Left cardiac atrium (tissue), 4 donors: ENCODE measurements at regions of chr15 and their contacts with region 1.

Region 1: GRCh38 chr15:85000937-85001336 is 19.3 kb downstream of the PDE8A start:
- DNase-seq: peak; percentile 52
- ATAC-seq: peak in 1 of 2 donors; percentile 44

Region 2: DNA sequence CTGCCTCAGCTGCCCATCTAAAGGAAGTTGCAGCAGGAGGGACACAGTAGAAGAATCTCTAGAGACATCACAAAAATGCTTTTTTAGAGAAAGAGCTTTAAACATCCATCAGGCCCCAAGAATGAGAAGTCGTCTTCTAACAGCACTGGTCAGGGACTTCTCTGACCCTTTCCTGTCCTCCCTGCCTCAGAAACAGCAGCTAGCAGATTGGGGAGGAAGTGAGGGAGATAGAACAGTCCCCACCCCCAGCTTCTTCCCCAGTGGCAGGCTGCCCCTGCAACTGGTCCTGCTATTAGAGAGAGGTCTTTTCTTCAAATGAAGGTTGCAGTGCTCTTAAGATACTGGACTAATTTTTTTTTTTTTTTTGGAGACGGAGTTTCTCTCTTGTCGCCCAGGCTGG is 35.8 kb after region 1 on chr15:
- intact Hi-C with region 1: loop called in 1 of 2 experiments (anchors 1 kb)
- DNase-seq: no peak
- ATAC-seq: peak; percentile 55 to 68

Region 3: GRCh38 chr15:85354461-85354860 is 353.5 kb after region 1 on chr15:
- intact Hi-C with region 1: no loop called
- DNase-seq: no peak
- ATAC-seq: peak in 1 of 2 donors; percentile 23